Left cardiac atrium (tissue), 4 donors: ENCODE measurements at regions of chr4 and their contacts with region 1.

Region 1: GRCh38 chr4:186037692-186038658 is 31.0 kb upstream of the TLR3 start:
- DNase-seq: no peak
- ATAC-seq: peak; percentile 92 to 93

Region 2: DNA sequence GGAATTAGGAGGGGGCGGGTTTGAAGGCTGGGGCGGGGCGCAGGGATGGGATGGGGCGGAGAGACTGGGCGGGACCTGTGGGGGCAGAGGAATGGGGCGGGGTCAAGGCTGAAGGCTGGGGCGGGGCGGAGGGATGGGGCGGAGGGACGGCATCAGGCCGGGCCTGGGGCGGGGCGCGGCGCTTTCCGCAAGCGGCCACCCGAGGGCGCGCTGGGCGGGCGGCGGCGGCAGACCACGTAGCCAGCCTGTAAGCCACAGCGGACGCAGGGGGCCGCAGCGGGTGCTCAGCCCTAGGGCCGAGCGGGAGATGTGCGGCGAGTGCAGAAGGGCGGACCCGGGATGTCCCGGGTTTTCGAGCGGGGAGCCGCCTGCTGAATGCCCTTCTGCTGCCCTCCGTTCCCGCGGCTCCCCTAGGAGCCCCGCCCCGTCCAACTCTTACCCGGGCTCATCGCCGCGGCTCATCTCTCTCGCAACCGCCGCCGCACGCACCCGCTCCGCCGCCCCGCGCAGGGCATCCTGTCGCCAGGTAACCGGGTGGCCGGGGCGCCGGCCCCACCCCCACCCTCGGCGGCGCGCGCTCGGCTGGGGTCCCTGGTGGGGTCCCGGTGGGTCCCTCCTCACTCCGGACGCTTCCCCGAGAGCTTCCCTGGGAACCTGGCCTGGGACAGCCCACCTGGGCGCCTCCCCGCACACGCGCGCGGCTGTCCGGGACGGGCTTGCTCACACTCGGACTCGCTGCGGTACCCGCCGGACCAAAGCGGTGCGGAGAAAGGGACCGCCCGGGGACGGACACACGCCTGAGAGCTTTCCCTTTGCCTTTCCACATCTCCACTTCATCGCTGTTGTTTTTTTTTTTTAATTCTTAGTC is 566.5 kb before region 1 on chr4 and contains the start of gene CCDC110:
- intact Hi-C with region 1: loop called in 1 of 2 experiments (anchors 10 kb)
- DNase-seq: peak; percentile 95
- ATAC-seq: peak; percentile 99
- total RNA-seq, gene CCDC110: 1.6 to 2.0 TPM

Region 3: GRCh38 chr4:185624259-185624589 is 413.8 kb before region 1 on chr4:
- intact Hi-C with region 1: loop called in 1 of 2 experiments (anchors 10 kb)
- DNase-seq: no peak
- ATAC-seq: peak in 1 of 2 donors; percentile 21

Region 4: DNA sequence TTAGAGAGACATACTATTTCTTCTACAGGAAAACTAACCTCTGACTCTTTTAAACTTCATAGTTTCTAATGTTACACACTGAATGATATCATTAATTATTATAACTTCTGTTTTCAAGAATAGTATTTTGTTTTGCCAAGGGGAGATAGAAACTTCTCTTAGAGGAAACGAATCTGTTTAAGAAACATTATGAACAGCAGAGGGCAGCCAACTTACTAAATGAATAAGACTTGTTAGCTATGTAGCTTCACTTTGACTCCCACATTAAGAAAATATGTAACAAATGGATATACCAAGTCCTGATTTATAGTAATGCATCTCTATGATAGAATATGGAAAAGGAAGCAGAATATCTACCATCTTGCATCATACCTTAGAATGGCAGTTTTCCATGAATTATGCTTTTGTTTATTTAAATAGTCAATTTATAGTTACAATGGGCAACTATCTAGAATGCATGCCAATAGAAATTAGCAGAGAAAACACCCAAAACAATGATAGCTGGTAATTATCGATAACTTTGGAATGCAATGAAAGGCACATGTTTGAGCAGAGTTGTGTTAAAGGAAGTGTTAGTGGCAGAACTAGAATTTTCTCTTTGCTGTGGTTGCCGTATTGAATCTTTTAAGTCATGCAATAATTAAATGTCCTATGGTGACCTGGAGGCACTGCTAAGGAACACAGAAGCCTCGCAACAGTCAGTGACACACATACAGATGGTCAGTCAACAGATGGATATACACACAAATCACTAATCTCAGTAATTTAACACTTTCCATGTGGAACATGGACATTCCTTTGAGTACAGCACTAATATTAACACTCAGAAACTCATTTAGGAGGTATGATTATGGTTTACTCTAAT is 396.9 kb before region 1 on chr4:
- intact Hi-C with region 1: loop called in 1 of 2 experiments (anchors 5 kb)
- DNase-seq: no peak
- ATAC-seq: peak in 1 of 2 donors; percentile 35